Heart left ventricle (tissue), 16 donors: ENCODE measurements at regions of chr3 and their contacts with region 1.

Region 1: GRCh38 chr3:101849051-101849720 is at the start of gene NFKBIZ:
- DNase-seq: peak; percentile 97 to 98 (median 98)
- ATAC-seq: peak; percentile 96 to 99 (median 98)
- H3K4me3 ChIP-seq: peak within 1 kb of the TSS; percentile 77 to 99 (median 89)
- H3K27ac ChIP-seq: peak within 1 kb of the TSS; percentile 96 to 100 (median 99)
- H3K4me1 ChIP-seq: peaks cover 0 to 49% (median 13%) of the 10 kb centered on the region in 12 donors
- H3K27me3 ChIP-seq: no peaks in the 10 kb centered on the region
- CTCF ChIP-seq: no peak
- POLR2A ChIP-seq: peak; percentile 25 to 98
- total RNA-seq, gene NFKBIZ: 6.9 to 44.8 (median 10.0) TPM

Region 2: GRCh38 chr3:101809178-101810021 is 39.8 kb before region 1 on chr3:
- intact Hi-C with region 1: loop called in 4 of 10 experiments (anchors 5 kb)
- DNase-seq: no peak
- ATAC-seq: peak in 2 of 4 donors; percentile 39 to 51
- H3K4me3 ChIP-seq: no peak overlapping the region
- H3K27ac ChIP-seq: peak overlapping the region in 2 of 12 donors; percentile 31 to 63
- H3K4me1 ChIP-seq: peaks cover 0 to 28% (median 15%) of the 10 kb centered on the region in 12 donors
- H3K27me3 ChIP-seq: no peaks in the 10 kb centered on the region
- CTCF ChIP-seq: peak; percentile 45 to 79 (median 70)
- POLR2A ChIP-seq: no peak

Region 3: GRCh38 chr3:101819758-101820157 is 29.4 kb before region 1 on chr3:
- intact Hi-C with region 1: loop called in 4 of 10 experiments (anchors 5 kb)
- DNase-seq: no peak
- ATAC-seq: no peak
- H3K4me3 ChIP-seq: no peak overlapping the region
- H3K27ac ChIP-seq: no peak overlapping the region
- H3K4me1 ChIP-seq: peaks cover 0 to 17% (median 1%) of the 10 kb centered on the region in 12 donors
- H3K27me3 ChIP-seq: no peaks in the 10 kb centered on the region
- CTCF ChIP-seq: no peak
- POLR2A ChIP-seq: no peak